ENCODE measurements at regions of chr4 and their contacts with region 1.

Region 1: DNA sequence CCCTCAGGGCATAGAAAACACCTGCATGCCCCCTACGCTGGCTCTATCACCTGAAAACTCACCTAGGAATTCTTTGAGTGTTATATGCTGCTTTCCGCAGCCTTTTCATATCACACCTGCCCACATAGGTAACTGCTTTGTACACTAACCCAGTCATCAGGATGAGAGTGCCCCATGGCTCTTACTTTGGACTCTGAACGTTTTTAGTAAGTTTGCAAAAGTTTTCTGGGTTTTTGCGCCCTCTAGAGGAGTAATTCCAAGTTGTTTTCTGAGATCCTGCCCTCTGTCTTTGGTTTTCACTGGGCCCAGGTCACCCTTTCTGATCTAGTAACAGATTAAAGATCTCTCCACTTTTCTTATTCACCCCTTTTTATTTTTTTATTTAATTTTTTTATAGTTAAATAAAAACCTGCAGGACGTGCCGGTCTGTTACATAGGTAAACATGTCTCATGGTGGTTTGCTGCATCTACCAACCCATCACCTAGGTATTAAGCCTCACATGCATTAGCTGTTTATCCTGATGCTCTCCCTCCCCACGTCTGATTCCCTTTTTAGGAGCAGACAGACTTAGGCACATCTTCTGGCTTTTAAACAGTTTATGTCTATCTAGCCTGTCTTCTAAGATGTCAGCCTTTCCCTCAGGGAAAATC is 139.2 kb downstream of the NWD2 start:
- DNase-seq: peak; percentile 36
- ATAC-seq: peak; percentile 85
- H3K4me3 ChIP-seq: no peak overlapping the region
- H3K27ac ChIP-seq: no peak overlapping the region
- H3K4me1 ChIP-seq: no peaks in the 10 kb centered on the region
- H3K27me3 ChIP-seq: no peaks in the 10 kb centered on the region
- CTCF ChIP-seq: peak; percentile 66 to 78 (median 70)
- POLR2A ChIP-seq: no peak
- RAD21 ChIP-seq: peak; percentile 68

Region 2: GRCh38 chr4:37188100-37188499 is 195.6 kb before region 1 on chr4:
- CTCF ChIA-PET with region 1: no interaction called
- POLR2A ChIA-PET with region 1: no interaction called
- RAD21 ChIA-PET with region 1: no interaction called
- intact Hi-C with region 1: loop called (anchors 5 kb)
- DNase-seq: peak; percentile 2
- ATAC-seq: 0 out of 2 replicates have a peak, but pooled peaks have one; percentile 42
- H3K4me3 ChIP-seq: no peak overlapping the region
- H3K27ac ChIP-seq: no peak overlapping the region
- H3K4me1 ChIP-seq: no peaks in the 10 kb centered on the region
- H3K27me3 ChIP-seq: no peaks in the 10 kb centered on the region
- CTCF ChIP-seq: peak in 2 of 3 experiments; percentile 55 to 59; a peak in 4 of 6 replicates
- POLR2A ChIP-seq: no peak
- RAD21 ChIP-seq: no peak